CD8-positive, alpha-beta memory T cell (primary cell): ENCODE measurements at regions of chr17 and their contacts with region 1.

Region 1: DNA sequence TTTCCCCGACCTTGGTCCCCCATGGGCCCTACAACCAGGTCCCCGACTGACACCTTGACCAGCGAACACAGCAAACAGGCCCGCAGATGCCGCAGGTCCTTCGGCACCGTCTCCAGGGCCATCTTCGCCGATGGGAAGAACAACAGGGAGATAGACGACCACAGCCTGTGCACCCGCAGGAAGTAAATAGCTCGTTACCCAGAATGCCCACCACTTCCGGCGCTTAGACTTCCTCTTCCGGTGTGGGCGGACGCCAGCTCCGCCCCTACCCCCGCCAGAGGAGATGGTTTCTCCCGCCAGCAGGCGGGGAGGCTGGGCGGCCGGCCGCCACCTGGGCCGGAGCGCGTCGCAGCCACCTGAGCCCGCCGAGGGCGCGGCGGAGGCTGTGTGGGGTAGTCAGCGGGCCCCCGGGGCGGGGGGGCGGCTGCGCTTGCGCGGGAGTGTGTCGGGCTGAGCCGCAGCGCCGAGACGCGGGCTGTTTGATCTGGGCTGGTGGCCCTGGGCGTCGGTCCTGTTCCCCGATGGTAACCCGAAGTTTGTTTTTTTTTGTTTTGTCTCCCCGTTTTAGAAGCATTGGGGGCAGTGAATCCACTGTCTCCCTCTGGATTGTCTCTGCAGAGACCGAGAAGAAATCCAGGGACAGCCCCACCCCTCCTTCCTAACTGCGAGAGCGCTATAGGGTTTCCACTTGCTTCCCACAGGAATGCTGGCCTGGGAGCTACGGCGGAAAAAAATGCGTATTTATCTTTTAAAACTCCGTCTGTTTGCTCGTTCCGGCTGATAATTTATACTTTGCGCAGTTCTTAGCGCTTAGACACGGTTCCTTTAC is at the start of gene SUPT4H1:
- DNase-seq: peak; percentile 84 to 95 (median 90)
- H3K4me3 ChIP-seq: peak within 1 kb of the TSS; percentile 98
- H3K4me3 Mint-ChIP-seq: peak within 1 kb of the TSS; percentile 95 to 100 (median 99)
- H3K27ac ChIP-seq: peak within 1 kb of the TSS; percentile 93
- H3K27ac Mint-ChIP-seq: peak within 1 kb of the TSS; percentile 95 to 100 (median 98)
- H3K4me1 ChIP-seq: peaks cover 38% of the 10 kb centered on the region
- H3K4me1 Mint-ChIP-seq: peaks cover 40 to 66% (median 61%) of the 10 kb centered on the region in 3 donors
- H3K27me3 ChIP-seq: no peaks in the 10 kb centered on the region
- H3K27me3 Mint-ChIP-seq: no peaks in the 10 kb centered on the region
- total RNA-seq, gene SUPT4H1: 145 to 149 TPM

Region 2: GRCh38 chr17:57943140-57943539 is 409.1 kb before region 1 on chr17:
- CTCF ChIA-PET with region 1: no interaction called
- POLR2A ChIA-PET with region 1: interaction called, 23 read pairs
- DNase-seq: no peak
- H3K4me3 ChIP-seq: no peak overlapping the region
- H3K4me3 Mint-ChIP-seq: no peak overlapping the region
- H3K27ac ChIP-seq: no peak overlapping the region
- H3K27ac Mint-ChIP-seq: no peak overlapping the region
- H3K4me1 ChIP-seq: peaks cover 14% of the 10 kb centered on the region
- H3K4me1 Mint-ChIP-seq: peaks cover 14 to 25% (median 20%) of the 10 kb centered on the region in 3 donors
- H3K27me3 ChIP-seq: no peaks in the 10 kb centered on the region
- H3K27me3 Mint-ChIP-seq: peaks cover 3 to 28% of the 10 kb centered on the region in 2 donors

Region 3: GRCh38 chr17:58270476-58271215 is 81.6 kb before region 1 on chr17:
- CTCF ChIA-PET with region 1: no interaction called
- POLR2A ChIA-PET with region 1: no interaction called
- DNase-seq: no peak
- H3K4me3 ChIP-seq: no peak overlapping the region
- H3K4me3 Mint-ChIP-seq: no peak overlapping the region
- H3K27ac ChIP-seq: no peak overlapping the region
- H3K27ac Mint-ChIP-seq: no peak overlapping the region
- H3K4me1 ChIP-seq: no peaks in the 10 kb centered on the region
- H3K4me1 Mint-ChIP-seq: no peaks in the 10 kb centered on the region
- H3K27me3 ChIP-seq: no peaks in the 10 kb centered on the region
- H3K27me3 Mint-ChIP-seq: peaks cover 14 to 31% of the 10 kb centered on the region in 2 donors

Region 4: GRCh38 chr17:58329035-58329809 is 23.0 kb before region 1 on chr17:
- CTCF ChIA-PET with region 1: interaction called, 504 read pairs
- POLR2A ChIA-PET with region 1: interaction called, 491 read pairs
- DNase-seq: peak; percentile 48 to 78 (median 72)
- H3K4me3 ChIP-seq: peak overlapping the region; percentile 98
- H3K4me3 Mint-ChIP-seq: peak overlapping the region; percentile 89 to 100 (median 95)
- H3K27ac ChIP-seq: peak overlapping the region; percentile 96
- H3K27ac Mint-ChIP-seq: peak overlapping the region; percentile 90 to 99 (median 98)
- H3K4me1 ChIP-seq: peaks cover 43% of the 10 kb centered on the region
- H3K4me1 Mint-ChIP-seq: peaks cover 48 to 64% (median 55%) of the 10 kb centered on the region in 3 donors
- H3K27me3 ChIP-seq: no peaks in the 10 kb centered on the region
- H3K27me3 Mint-ChIP-seq: peaks cover 0 to 6% of the 10 kb centered on the region in 2 donors

Region 5: DNA sequence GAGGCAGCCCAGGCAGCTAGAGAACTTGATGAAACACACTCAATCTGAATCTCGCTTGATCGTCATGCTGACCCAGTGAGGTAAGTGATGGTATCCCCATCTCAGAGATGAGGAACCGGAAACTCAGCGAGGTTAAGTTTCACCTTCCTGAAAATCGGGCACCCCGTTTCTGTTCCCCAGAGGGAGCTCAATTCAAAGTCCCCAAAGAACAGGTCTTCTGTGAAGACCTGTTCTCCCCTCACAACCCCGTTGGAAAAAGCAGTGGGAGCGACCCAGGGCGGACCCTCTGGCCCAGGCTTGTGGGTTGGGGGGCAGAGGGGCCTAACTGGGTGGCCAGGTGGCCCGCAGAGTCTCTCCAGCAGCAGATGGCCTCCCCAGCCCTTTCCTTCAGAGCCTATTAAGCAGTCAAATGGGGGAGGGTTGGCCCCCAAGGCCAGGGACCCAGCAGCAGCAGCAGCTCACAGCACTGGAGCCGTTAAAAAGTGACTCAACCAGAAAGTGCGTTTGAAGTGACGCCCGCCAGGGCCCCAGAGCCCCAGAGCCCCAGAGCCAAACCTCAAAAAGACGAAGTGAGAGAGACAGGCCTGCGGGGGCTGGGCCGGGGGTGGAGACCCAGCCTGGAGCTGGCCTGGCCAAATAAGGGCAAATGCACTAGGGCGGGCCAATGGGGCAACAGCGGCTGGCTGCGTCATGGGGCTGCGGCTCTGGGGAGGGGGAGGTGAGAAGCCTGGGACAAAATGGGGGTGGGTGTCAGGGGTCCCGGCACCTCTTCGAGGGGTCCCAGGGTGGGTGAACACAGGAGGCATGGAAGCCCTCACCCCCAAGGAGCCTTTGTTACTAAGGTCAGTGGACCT is 14.4 kb before region 1 on chr17:
- CTCF ChIA-PET with region 1: interaction called, 164 read pairs
- POLR2A ChIA-PET with region 1: interaction called, 491 read pairs
- DNase-seq: peak; percentile 83 to 95 (median 91)
- H3K4me3 ChIP-seq: peak overlapping the region; percentile 98
- H3K4me3 Mint-ChIP-seq: peak overlapping the region; percentile 89 to 100 (median 95)
- H3K27ac ChIP-seq: peak overlapping the region; percentile 96
- H3K27ac Mint-ChIP-seq: peak overlapping the region; percentile 93 to 100 (median 98)
- H3K4me1 ChIP-seq: peaks cover 85% of the 10 kb centered on the region
- H3K4me1 Mint-ChIP-seq: peaks cover 79 to 92% (median 87%) of the 10 kb centered on the region in 3 donors
- H3K27me3 ChIP-seq: no peaks in the 10 kb centered on the region
- H3K27me3 Mint-ChIP-seq: peaks cover 0 to 2% of the 10 kb centered on the region in 2 donors

Region 6: GRCh38 chr17:58417300-58418092 is 65.3 kb after region 1 on chr17 and contains the start of gene RNF43:
- CTCF ChIA-PET with region 1: interaction called, 22 read pairs
- POLR2A ChIA-PET with region 1: interaction called, 13 read pairs
- DNase-seq: peak; percentile 72 to 93 (median 85)
- H3K4me3 ChIP-seq: peak within 1 kb of the TSS; percentile 15
- H3K4me3 Mint-ChIP-seq: peak within 1 kb of the TSS in 5 of 7 donors; percentile 0 to 37 (median 2)
- H3K27ac ChIP-seq: peak within 1 kb of the TSS; percentile 28
- H3K27ac Mint-ChIP-seq: peak within 1 kb of the TSS; percentile 0 to 88 (median 55)
- H3K4me1 ChIP-seq: peaks cover 15% of the 10 kb centered on the region
- H3K4me1 Mint-ChIP-seq: peaks cover 9 to 19% (median 14%) of the 10 kb centered on the region in 3 donors
- H3K27me3 ChIP-seq: no peaks in the 10 kb centered on the region
- H3K27me3 Mint-ChIP-seq: no peaks in the 10 kb centered on the region
- total RNA-seq, gene RNF43: 0.47 to 1.2 TPM